ENCODE measurements at regions of chr16 and their contacts with region 1.

Region 1: DNA sequence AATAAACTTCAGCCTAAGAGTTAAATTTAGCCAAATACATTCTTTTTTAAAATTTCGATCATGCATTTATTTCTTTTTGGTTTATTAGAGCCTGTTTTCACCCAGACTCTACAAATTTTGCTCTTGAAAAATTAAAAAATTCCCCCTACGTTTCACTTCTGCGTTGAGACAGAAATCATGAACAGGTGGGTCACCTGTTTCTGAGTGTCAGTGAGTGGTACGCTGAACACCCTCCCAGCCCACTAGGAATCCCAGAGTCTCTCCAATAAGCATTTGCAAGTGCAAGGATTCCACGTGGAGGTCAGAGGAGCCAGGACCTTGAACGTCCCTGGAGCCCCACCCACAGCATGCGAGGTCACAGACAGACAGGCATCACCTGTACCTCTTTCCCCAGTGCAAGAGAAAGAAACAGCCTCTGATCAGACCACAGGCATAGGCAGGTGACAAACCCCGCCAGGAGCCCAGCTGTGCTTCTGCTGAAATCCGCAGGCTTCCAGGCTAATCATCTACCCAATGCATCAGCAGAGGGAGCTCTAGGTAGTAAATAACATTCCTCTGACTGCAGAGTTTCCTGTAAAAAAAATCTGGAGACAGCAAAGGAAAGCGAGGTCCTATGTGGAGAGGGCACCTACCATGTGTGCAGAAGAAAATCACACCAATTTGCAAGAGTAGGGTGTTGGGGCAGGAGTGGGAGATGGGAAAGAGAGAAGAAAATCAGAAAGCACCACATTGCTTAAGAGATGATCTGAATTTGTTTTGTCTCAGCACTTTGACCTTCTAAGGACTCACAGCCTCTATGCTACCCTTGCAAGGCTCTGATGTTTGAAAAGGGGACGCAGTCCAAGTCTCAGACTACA is 5.9 kb upstream of the XYLT1 start:
- DNase-seq: peak; percentile 20
- H3K4me3 Mint-ChIP-seq: no peak overlapping the region
- H3K27ac Mint-ChIP-seq: no peak overlapping the region
- H3K4me1 Mint-ChIP-seq: peaks cover 34% of the 10 kb centered on the region
- H3K27me3 Mint-ChIP-seq: peaks cover 37% of the 10 kb centered on the region

Region 2: GRCh38 chr16:17432901-17433576 is 43.6 kb before region 1 on chr16:
- intact Hi-C with region 1: no loop called
- DNase-seq: no peak
- H3K4me3 Mint-ChIP-seq: no peak overlapping the region
- H3K27ac Mint-ChIP-seq: no peak overlapping the region
- H3K4me1 Mint-ChIP-seq: peaks cover 10% of the 10 kb centered on the region
- H3K27me3 Mint-ChIP-seq: no peaks in the 10 kb centered on the region

Region 3: GRCh38 chr16:17497648-17498047 is 21.0 kb after region 1 on chr16:
- intact Hi-C with region 1: no loop called
- DNase-seq: no peak
- H3K4me3 Mint-ChIP-seq: no peak overlapping the region
- H3K27ac Mint-ChIP-seq: no peak overlapping the region
- H3K4me1 Mint-ChIP-seq: no peaks in the 10 kb centered on the region
- H3K27me3 Mint-ChIP-seq: peaks cover 8% of the 10 kb centered on the region

Region 4: GRCh38 chr16:17556276-17557052 is 79.8 kb after region 1 on chr16:
- intact Hi-C with region 1: loop called (anchors 10 kb)
- DNase-seq: no peak
- H3K4me3 Mint-ChIP-seq: no peak overlapping the region
- H3K27ac Mint-ChIP-seq: no peak overlapping the region
- H3K4me1 Mint-ChIP-seq: no peaks in the 10 kb centered on the region
- H3K27me3 Mint-ChIP-seq: peaks cover 5% of the 10 kb centered on the region

Region 5: GRCh38 chr16:17578921-17579874 is 102.6 kb after region 1 on chr16:
- intact Hi-C with region 1: loop called (anchors 5 kb)
- DNase-seq: peak; percentile 43
- H3K4me3 Mint-ChIP-seq: no peak overlapping the region
- H3K27ac Mint-ChIP-seq: no peak overlapping the region
- H3K4me1 Mint-ChIP-seq: peaks cover 6% of the 10 kb centered on the region
- H3K27me3 Mint-ChIP-seq: peaks cover 13% of the 10 kb centered on the region